Mammary epithelial cell (primary cell): ENCODE measurements at regions of chr5 and their contacts with region 1.

Region 1: DNA sequence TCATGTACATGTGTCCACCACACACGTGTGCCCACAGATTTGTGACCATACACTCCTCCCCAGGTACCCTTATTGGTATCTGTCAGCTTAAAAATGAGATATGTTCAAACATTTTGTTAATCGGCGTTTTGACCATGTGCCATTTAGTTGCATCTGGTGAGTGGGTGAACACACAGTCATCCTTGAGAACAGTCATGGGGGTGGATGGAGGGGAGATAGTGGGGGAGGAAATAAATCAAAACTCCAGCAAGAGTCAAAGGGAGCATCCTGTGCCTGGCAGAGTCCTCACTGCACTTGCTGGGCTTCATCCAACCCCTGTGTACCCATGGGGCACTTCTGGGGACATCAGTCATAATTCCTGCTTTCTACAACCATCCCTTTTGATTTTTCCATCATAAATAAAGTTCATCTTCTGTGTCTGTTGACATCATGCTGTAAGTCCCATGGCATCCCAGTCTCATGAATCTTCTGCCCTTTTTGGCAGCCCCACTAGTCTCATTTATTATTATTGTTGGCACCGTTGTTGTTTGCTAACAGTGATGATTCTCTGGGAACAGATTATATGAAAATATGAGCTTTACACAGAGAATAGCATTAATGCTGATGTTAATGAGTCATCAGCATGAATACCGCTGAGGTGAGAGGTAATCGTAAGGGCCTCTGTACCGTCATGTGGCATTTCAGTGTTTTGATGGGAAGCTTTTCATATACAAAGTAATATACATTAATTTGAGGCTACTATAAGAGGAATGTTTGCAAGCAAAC is 24.4 kb upstream of the CLK4 start:
- DNase-seq: peak; percentile 90
- H3K4me3 ChIP-seq: no peak overlapping the region
- H3K27ac ChIP-seq: no peak overlapping the region
- H3K4me1 ChIP-seq: no peaks in the 10 kb centered on the region
- H3K27me3 ChIP-seq: no peaks in the 10 kb centered on the region
- CTCF ChIP-seq: no peak

Region 2: DNA sequence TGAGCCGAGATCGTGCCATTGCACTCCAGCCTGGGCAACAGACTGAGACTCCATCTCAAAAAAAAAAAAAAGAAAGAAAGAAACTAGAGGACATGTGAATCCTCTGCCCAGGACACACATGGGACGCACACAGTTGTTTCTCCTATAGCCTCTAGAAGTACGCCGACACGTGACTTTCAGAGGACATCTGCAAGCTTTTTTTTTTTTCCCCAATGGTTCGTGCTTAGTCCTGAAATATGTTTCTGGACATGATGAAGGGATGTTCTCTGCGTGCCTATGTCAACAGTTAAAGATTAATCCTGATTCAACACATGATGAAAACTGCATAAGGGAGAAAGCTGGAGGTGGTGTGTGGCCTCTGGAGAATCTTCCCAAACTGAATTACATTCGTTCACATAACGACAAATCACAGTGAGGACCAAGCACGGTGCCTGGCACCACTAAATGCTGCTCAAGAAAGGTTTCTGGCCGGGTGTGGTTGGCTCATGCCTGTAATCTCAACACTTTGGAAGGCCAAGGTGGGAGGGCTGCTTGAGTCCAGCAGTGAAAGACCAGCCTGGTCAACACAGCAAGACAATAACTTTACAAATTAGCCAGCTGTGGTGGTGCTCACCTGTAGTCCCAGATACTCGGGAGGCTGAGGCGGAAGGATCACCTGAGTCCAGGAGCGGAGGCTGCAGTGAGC is 70.8 kb before region 1 on chr5:
- CTCF ChIA-PET with region 1: no interaction called
- dilution Hi-C with region 1: loop called (anchors 5 kb)
- in situ Hi-C with region 1: no loop called
- intact Hi-C with region 1: no loop called
- DNase-seq: no peak
- H3K4me3 ChIP-seq: no peak overlapping the region
- H3K27ac ChIP-seq: no peak overlapping the region
- H3K4me1 ChIP-seq: no peaks in the 10 kb centered on the region
- H3K27me3 ChIP-seq: no peaks in the 10 kb centered on the region
- CTCF ChIP-seq: no peak

Region 3: DNA sequence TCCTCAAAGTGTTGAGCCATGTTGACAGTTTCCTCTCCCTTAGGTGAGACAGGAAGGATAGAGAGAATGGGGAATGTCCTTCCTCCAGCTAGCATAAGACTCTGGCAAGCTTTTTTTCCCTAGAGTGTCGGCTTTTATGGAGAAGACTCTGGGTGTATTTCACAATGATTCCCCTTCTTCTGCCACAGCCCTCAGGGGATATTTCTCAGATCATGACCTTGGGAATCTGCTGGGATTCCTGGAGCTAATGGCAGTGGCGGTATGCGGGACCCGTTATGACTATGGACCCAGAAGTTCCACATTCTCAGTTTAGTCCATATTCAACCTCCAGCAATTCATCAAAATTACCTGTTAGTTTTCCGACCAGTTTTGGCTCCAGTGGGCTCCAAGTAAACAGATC is 55.4 kb after region 1 on chr5:
- CTCF ChIA-PET with region 1: no interaction called
- dilution Hi-C with region 1: loop called (anchors 5 kb)
- in situ Hi-C with region 1: no loop called
- intact Hi-C with region 1: no loop called
- DNase-seq: no peak
- H3K4me3 ChIP-seq: no peak overlapping the region
- H3K27ac ChIP-seq: no peak overlapping the region
- H3K4me1 ChIP-seq: no peaks in the 10 kb centered on the region
- H3K27me3 ChIP-seq: no peaks in the 10 kb centered on the region
- CTCF ChIP-seq: no peak

Region 4: DNA sequence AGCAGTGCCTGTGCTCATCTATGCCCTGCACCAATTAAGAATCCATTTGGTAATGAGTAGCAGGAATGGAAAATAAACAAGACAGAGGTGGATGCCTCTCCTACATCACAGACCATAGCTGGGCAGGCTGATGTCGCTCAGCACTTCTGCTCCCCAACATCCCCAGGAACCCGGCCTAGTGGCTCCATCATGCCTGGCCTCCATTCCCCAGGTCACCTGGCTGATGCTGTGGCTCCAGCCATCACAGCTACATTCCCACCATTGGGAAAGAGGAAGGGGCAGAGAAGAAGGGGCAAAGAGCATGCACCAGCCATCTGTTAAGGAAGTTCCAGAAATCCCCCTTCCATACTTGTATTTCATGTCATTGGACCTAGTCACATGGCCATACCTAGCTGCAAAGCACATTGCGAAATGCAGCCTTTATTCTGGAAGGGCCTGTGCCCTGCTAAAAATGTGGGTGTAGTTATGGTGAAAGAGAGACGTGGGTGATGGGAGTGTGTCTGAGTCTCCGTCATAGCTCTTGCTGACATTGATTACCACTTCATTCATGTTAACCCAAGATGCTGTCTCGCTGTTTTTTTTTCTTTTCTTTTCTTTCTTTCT is 780.1 kb after region 1 on chr5:
- CTCF ChIA-PET with region 1: interaction called, 20 read pairs
- dilution Hi-C with region 1: no loop called
- in situ Hi-C with region 1: no loop called
- intact Hi-C with region 1: no loop called
- DNase-seq: no peak
- H3K4me3 ChIP-seq: no peak overlapping the region
- H3K27ac ChIP-seq: no peak overlapping the region
- H3K4me1 ChIP-seq: no peaks in the 10 kb centered on the region
- H3K27me3 ChIP-seq: no peaks in the 10 kb centered on the region
- CTCF ChIP-seq: no peak